ENCODE measurements at regions of chr2 and their contacts with region 1.

Region 1: GRCh38 chr2:100610381-100610831 is 47.6 kb downstream of the PDCL3 start:
- DNase-seq: peak; percentile 78 to 98 (median 90)

Region 2: DNA sequence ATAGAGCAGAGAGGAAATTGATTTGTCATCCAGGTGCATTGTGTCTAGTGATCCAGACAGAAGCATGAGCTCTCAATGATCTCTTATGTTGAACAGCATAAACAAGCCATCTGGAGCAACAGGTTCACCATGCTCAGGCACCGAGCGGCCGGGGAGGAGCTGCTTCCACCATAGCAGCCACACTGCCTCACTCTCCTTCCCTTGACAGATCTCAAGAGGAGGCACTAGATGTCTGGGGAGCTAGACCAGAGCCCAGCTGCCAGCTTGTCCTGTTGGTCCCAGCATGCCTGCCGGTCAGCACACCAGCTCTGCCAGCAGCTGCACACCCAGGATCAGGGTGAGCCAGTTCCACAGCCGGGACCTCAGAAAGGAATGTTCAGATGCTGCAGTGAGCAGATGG is 270.6 kb before region 1 on chr2:
- intact Hi-C with region 1: no loop called
- DNase-seq: peak in 1 of 10 donors; percentile 56

Region 3: DNA sequence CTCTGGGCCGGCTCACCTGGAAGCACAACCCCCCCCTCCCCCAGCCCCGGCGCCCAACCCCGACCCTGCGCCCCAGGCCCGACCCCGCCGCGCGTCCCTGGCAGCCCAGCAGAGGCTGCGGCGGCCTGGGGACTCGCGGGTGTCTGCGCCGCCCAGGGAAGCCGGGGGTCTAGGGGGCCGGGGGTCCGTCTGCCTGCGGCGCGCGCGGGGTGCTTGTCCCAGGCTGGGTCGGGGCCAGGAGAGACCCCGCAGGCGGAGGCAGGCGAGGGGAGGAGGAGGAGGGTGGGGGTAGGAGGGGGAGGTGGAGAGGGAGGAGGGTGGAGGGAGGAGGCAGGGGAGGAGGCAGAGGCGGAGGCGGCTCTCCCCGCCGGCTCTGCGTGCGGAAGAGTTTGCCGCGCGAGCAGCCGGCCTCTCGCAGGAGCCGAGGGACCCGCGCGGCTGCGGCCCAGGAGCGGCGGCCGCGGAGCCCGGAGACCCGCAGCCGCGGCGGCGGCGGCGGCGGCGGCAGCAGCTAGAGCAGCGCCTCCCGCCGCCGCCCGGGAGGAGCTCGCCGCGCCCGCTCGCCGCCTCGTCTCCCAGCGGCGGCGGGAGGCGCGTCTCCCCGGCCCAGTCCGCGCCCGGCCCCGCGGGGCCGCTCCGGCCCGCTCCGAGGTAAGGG is 209.5 kb after region 1 on chr2 and contains the start of gene NPAS2:
- intact Hi-C with region 1: loop called (anchors 10 kb)
- DNase-seq: peak in 5 of 10 donors; percentile 26 to 91 (median 76)

Region 4: GRCh38 chr2:101151141-101151858 is 540.9 kb after region 1 on chr2 and contains the start of gene TBC1D8:
- intact Hi-C with region 1: loop called (anchors 10 kb)
- DNase-seq: peak; percentile 63 to 96 (median 80)

Measured in posterior cingulate gyrus (tissue), 11 donors.